ENCODE measurements at regions of chr5 and their contacts with region 1.

Region 1: GRCh38 chr5:120457839-120458507 is 6.1 kb upstream of the PRR16 start:
- DNase-seq: peak; percentile 58
- H3K4me3 Mint-ChIP-seq: peak overlapping the region; percentile 27
- H3K27ac Mint-ChIP-seq: no peak overlapping the region
- H3K4me1 Mint-ChIP-seq: peaks cover 5% of the 10 kb centered on the region
- H3K27me3 Mint-ChIP-seq: peaks cover 22% of the 10 kb centered on the region

Region 2: GRCh38 chr5:120388016-120388781 is 69.8 kb before region 1 on chr5:
- intact Hi-C with region 1: loop called (anchors 5 kb)
- DNase-seq: no peak
- H3K4me3 Mint-ChIP-seq: peak overlapping the region; percentile 49
- H3K27ac Mint-ChIP-seq: peak overlapping the region; percentile 62
- H3K4me1 Mint-ChIP-seq: peaks cover 17% of the 10 kb centered on the region
- H3K27me3 Mint-ChIP-seq: no peaks in the 10 kb centered on the region

Region 3: GRCh38 chr5:120413706-120414105 is 44.3 kb before region 1 on chr5:
- intact Hi-C with region 1: no loop called
- DNase-seq: no peak
- H3K4me3 Mint-ChIP-seq: no peak overlapping the region
- H3K27ac Mint-ChIP-seq: no peak overlapping the region
- H3K4me1 Mint-ChIP-seq: no peaks in the 10 kb centered on the region
- H3K27me3 Mint-ChIP-seq: no peaks in the 10 kb centered on the region